Esophagus squamous epithelium (tissue), 5 donors: ENCODE measurements at regions of chr15 and their contacts with region 1.

Region 1: DNA sequence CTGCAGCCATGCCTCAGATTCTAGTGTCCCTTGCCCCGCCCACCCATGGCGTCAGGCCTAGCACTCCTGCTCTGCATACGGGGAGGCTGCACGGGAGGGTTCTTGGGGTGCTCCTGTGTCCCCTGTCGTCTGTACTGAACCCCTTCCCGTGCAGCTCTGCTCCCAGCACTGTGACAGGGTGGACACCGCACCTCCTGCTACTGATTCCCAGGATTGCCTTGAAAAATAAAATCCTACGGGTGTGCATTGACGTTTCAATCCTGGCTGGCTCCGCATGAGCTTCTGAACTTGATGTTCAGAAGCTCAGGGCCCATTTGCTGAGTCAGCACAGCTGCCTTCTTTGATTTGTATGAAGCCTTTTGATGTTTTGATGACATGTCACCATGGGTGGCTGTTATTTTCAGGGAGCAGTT is 176.4 kb downstream of the APBA2 start:
- DNase-seq: no peak
- H3K4me3 ChIP-seq: no peak overlapping the region
- H3K27ac ChIP-seq: no peak overlapping the region
- H3K4me1 ChIP-seq: no peaks in the 10 kb centered on the region
- H3K27me3 ChIP-seq: no peaks in the 10 kb centered on the region
- CTCF ChIP-seq: no peak
- POLR2A ChIP-seq: no peak

Region 2: DNA sequence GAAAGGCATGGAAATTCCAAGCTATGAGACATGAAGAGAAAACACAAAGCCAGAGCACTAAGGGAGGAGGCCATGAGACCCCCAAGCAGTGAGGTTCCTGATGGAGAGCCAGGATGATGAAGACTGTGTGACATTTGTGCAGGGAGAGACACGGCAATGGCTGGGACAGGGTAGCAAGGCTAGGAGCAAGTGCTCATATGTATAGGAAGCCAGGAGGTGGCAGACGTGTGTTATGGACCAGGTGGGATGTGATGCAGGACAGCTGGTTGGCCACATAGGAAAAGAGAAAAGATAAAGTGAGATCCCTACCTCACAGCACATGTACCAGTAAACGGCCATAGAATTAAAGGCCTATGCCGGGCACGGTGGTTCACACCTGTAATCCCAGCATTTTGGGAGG is 63.7 kb before region 1 on chr15:
- intact Hi-C with region 1: no loop called
- DNase-seq: no peak
- H3K4me3 ChIP-seq: no peak overlapping the region
- H3K27ac ChIP-seq: no peak overlapping the region
- H3K4me1 ChIP-seq: no peaks in the 10 kb centered on the region
- H3K27me3 ChIP-seq: no peaks in the 10 kb centered on the region
- CTCF ChIP-seq: no peak
- POLR2A ChIP-seq: no peak

Region 3: DNA sequence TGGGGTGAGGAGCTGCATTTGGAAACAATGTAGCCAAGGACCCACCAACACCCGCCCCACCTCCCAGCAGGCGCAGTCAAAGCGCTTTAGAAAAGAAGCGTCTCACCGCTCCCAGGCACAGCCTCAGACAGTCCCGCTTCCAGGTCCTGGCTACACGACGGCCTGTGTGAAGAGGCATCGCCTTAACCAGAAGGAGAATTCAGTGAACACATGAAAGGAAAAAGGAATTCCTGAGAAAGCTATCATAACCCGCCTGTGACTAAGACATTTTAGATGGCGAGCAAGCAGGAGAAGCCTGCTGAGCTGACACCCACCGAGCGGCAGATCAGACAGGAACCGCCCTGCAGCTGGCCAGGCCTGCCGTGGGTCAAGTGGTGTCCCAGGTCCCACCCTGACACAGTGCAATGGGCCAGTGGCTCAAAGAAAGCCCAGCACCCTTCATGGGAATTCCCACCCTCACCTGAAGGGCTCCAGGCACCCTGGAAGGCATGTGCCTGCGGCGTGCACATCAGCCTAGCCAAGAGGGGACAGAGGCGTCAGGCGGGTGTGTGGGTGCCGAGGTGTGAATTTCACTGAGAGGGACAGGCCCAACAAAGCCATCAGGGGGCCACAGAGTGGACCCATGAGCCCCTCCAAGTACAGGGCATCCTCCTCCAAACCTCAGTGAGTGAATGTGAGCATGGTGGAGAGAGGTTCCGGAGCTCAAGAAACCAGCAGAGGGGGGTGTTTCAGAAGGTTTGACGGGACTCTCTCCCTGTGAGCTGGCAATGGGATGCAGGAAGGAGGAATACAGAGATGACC is 62.6 kb after region 1 on chr15:
- intact Hi-C with region 1: loop called (anchors 10 kb)
- DNase-seq: no peak
- H3K4me3 ChIP-seq: no peak overlapping the region
- H3K27ac ChIP-seq: no peak overlapping the region
- H3K4me1 ChIP-seq: no peaks in the 10 kb centered on the region
- H3K27me3 ChIP-seq: peaks cover 0 to 31% (median 0%) of the 10 kb centered on the region in 4 donors
- CTCF ChIP-seq: no peak
- POLR2A ChIP-seq: no peak

Region 4: GRCh38 chr15:29252234-29252633 is 190.0 kb after region 1 on chr15:
- intact Hi-C with region 1: no loop called
- DNase-seq: no peak
- H3K4me3 ChIP-seq: no peak overlapping the region
- H3K27ac ChIP-seq: no peak overlapping the region
- H3K4me1 ChIP-seq: no peaks in the 10 kb centered on the region
- H3K27me3 ChIP-seq: no peaks in the 10 kb centered on the region
- CTCF ChIP-seq: no peak
- POLR2A ChIP-seq: no peak